Caco-2 (cell line): ENCODE measurements at regions of chr2 and their contacts with region 1.

Region 1: DNA sequence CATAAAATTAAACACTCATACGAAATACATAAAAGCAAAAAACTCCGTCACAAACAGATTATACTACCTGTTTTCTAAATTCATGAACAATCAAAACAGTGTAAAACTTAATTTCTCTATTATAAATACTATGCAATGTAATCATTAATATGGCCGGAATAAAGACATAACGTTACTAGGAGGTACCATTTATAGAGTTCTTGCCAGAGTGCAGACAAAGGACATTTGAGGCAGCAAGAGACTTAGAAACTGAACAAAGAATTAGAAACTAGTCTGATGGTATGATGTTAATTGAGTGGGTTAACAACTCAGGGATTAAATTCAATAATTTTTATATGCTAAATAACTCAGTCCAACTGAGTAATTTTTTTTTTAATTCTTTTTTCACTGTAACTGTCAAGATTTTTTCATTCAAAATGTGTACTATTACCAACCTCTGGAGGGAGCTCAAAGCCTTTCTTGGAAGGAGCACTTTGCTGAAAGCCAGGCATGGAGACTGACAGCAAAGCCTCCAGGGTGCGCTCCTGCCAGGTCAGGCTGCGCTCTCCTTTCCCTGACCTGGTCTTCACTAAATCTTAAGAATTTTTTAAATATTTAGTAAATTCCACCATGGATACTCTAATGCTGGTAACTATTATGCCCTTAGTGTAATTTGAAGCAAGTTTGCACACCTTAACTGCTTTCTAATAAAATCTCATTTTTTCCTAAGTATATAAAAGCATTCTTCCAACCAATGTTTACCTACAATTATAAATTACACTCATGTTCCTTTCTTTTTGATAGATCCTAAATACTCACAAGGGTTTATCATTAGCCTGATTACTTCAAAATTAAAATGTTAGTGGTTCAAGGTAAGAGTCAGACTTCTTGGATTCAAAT is 34.1 kb downstream of the WDR35 start:
- DNase-seq: peak; percentile 78 to 82
- H3K4me3 ChIP-seq: no peak overlapping the region
- H3K4me3 Mint-ChIP-seq: no peak overlapping the region
- H3K27ac Mint-ChIP-seq: no peak overlapping the region
- H3K4me1 ChIP-seq: no peaks in the 10 kb centered on the region
- H3K4me1 Mint-ChIP-seq: no peaks in the 10 kb centered on the region
- H3K27me3 ChIP-seq: no peaks in the 10 kb centered on the region
- H3K27me3 Mint-ChIP-seq: no peaks in the 10 kb centered on the region
- CTCF ChIP-seq: peak; percentile 88 to 95

Region 2: GRCh38 chr2:19989681-19990415 is 34.1 kb after region 1 on chr2 and contains the start of gene WDR35:
- CTCF ChIA-PET with region 1: interaction called, 4 read pairs
- POLR2A ChIA-PET with region 1: no interaction called
- intact Hi-C with region 1: loop called (anchors 2 kb)
- DNase-seq: peak; percentile 91 to 96
- H3K4me3 ChIP-seq: peak within 1 kb of the TSS; percentile 73
- H3K4me3 Mint-ChIP-seq: peak within 1 kb of the TSS; percentile 90
- H3K27ac Mint-ChIP-seq: peak within 1 kb of the TSS; percentile 75
- H3K4me1 ChIP-seq: peaks cover 6% of the 10 kb centered on the region
- H3K4me1 Mint-ChIP-seq: peaks cover 8% of the 10 kb centered on the region
- H3K27me3 ChIP-seq: no peaks in the 10 kb centered on the region
- H3K27me3 Mint-ChIP-seq: no peaks in the 10 kb centered on the region
- CTCF ChIP-seq: no peak
- total RNA-seq, gene WDR35: 7.2 and 8.1 TPM in 2 replicates

Region 3: DNA sequence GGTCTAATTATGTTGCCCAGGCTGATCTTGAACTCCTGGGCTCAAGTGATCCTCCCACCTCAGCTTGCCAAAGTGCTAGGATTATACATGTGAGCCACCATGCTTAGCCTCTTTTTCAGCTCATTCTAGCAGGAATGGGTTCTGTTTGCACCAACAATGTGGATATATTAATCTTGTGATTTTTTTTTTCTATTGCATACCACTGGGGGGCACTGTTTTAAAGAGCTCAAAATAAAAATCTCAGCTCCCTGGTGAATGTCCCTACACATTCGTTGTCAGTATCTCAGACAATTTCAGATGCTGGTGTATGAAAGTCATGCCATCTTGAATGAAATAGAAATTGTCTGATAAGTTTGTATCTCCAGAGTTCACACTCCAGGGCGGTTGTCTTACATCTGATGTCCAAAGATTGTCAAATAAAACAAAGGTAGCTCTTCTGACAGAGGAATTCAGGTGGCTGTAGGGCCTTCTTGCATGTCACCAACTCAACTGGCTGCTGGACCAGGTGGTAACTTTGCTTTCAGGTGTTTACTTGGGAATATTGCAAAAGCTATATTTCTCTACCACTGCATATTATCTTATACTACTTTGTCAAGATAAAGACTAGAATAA is 59.8 kb after region 1 on chr2:
- CTCF ChIA-PET with region 1: interaction called, 20 read pairs
- POLR2A ChIA-PET with region 1: no interaction called
- intact Hi-C with region 1: loop called (anchors 1 kb)
- DNase-seq: peak in 1 of 2 experiments; percentile 64
- H3K4me3 ChIP-seq: no peak overlapping the region
- H3K4me3 Mint-ChIP-seq: no peak overlapping the region
- H3K27ac Mint-ChIP-seq: no peak overlapping the region
- H3K4me1 ChIP-seq: peaks cover 17% of the 10 kb centered on the region
- H3K4me1 Mint-ChIP-seq: peaks cover 20% of the 10 kb centered on the region
- H3K27me3 ChIP-seq: no peaks in the 10 kb centered on the region
- H3K27me3 Mint-ChIP-seq: no peaks in the 10 kb centered on the region
- CTCF ChIP-seq: peak; percentile 54 to 61

Region 4: GRCh38 chr2:20291106-20291564 is 335.4 kb after region 1 on chr2:
- CTCF ChIA-PET with region 1: interaction called, 5 read pairs
- POLR2A ChIA-PET with region 1: no interaction called
- intact Hi-C with region 1: loop called (anchors 2 kb)
- DNase-seq: peak; percentile 83 to 86
- H3K4me3 ChIP-seq: no peak overlapping the region
- H3K4me3 Mint-ChIP-seq: no peak overlapping the region
- H3K27ac Mint-ChIP-seq: no peak overlapping the region
- H3K4me1 ChIP-seq: peaks cover 11% of the 10 kb centered on the region
- H3K4me1 Mint-ChIP-seq: peaks cover 7% of the 10 kb centered on the region
- H3K27me3 ChIP-seq: no peaks in the 10 kb centered on the region
- H3K27me3 Mint-ChIP-seq: no peaks in the 10 kb centered on the region
- CTCF ChIP-seq: peak; percentile 77 to 80